ENCODE measurements at regions of chr13 and their contacts with region 1.

Region 1: GRCh38 chr13:51452361-51453206 is at the start of gene INTS6:
- DNase-seq: peak; percentile 100
- H3K4me3 ChIP-seq: peak within 1 kb of the TSS; percentile 92 to 93
- H3K27ac ChIP-seq: peak within 1 kb of the TSS; percentile 99 to 100
- H3K4me1 ChIP-seq: no peaks in the 10 kb centered on the region
- H3K27me3 ChIP-seq: no peaks in the 10 kb centered on the region
- CTCF ChIP-seq: no peak
- POLR2A ChIP-seq: peak; percentile 100
- total RNA-seq, gene INTS6: 37.4 to 59.0 TPM

Region 2: DNA sequence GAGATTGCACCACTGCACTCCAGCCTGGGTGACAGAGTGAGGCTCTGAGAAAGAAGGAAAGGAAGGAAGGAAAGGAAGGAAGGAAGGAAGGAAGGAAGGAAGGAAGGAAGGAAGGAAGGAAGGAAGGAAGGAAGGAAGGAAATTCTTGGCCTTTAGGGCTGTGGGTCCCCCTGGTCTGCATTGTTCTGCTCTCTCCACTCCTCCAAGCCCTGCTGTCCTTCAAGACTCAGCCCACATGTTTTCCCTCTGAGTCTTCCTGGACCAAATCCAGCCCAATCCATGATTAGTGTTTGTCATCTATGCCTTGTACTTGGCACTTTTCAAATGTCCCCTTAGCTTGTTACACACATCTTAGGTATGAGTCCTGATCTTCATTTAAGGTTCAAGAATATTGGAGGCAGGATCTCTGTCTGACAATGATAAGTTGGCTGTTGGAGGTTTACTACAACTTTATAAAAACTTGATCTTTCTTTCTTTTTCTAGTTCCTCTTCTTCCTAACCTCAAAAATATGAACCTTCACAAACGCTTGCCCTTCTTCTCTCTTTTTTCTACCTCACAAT is 49.1 kb after region 1 on chr13:
- intact Hi-C with region 1: no loop called
- DNase-seq: no peak
- H3K4me3 ChIP-seq: no peak overlapping the region
- H3K27ac ChIP-seq: no peak overlapping the region
- H3K4me1 ChIP-seq: no peaks in the 10 kb centered on the region
- H3K27me3 ChIP-seq: no peaks in the 10 kb centered on the region
- CTCF ChIP-seq: no peak
- POLR2A ChIP-seq: no peak

Region 3: GRCh38 chr13:51583875-51584730 is 131.5 kb after region 1 on chr13 and contains the start of gene WDFY2:
- intact Hi-C with region 1: loop called (anchors 1 kb)
- DNase-seq: peak; percentile 100
- H3K4me3 ChIP-seq: peak within 1 kb of the TSS; percentile 83 to 90
- H3K27ac ChIP-seq: peak within 1 kb of the TSS; percentile 91 to 92
- H3K4me1 ChIP-seq: no peaks in the 10 kb centered on the region
- H3K27me3 ChIP-seq: no peaks in the 10 kb centered on the region
- CTCF ChIP-seq: peak in 2 of 4 experiments; percentile 25 to 34
- POLR2A ChIP-seq: peak; percentile 97
- total RNA-seq, gene WDFY2: 7.9 to 23.2 TPM

Region 4: GRCh38 chr13:51803422-51804294 is 351.1 kb after region 1 on chr13 and contains the start of gene DHRS12:
- intact Hi-C with region 1: loop called (anchors 2 kb)
- DNase-seq: peak; percentile 92
- H3K4me3 ChIP-seq: peak within 1 kb of the TSS; percentile 83 to 96
- H3K27ac ChIP-seq: peak within 1 kb of the TSS; percentile 99
- H3K4me1 ChIP-seq: peaks cover 18% of the 10 kb centered on the region
- H3K27me3 ChIP-seq: no peaks in the 10 kb centered on the region
- CTCF ChIP-seq: peak in 2 of 4 experiments; percentile 21 to 35
- POLR2A ChIP-seq: peak; percentile 79
- total RNA-seq, gene DHRS12: 18.7 to 19.8 TPM